Activated T-helper 1 cell treated with anti-CD3 and anti-CD28 coated beads, Interleukin-12 subunit alpha, Interleukin-12 subunit beta, Interleukin-2, Interleukin-4 antibody, amounts not matched to agents 30 ng/mL and 10 ng/mL and 1 ng/mL, durations not matched to agents 14 hours and 24 hours and 36 hours (primary cell): ENCODE measurements at regions of chr7 and their contacts with region 1.

Region 1: GRCh38 chr7:43834463-43835251 is 34.7 kb downstream of the MRPS24 start:
- DNase-seq: peak; percentile 24
- H3K4me3 Mint-ChIP-seq: peak overlapping the region; percentile 73
- H3K27ac Mint-ChIP-seq: peak overlapping the region; percentile 78
- H3K4me1 Mint-ChIP-seq: peaks cover 16% of the 10 kb centered on the region
- H3K27me3 Mint-ChIP-seq: peaks cover 2% of the 10 kb centered on the region

Region 2: DNA sequence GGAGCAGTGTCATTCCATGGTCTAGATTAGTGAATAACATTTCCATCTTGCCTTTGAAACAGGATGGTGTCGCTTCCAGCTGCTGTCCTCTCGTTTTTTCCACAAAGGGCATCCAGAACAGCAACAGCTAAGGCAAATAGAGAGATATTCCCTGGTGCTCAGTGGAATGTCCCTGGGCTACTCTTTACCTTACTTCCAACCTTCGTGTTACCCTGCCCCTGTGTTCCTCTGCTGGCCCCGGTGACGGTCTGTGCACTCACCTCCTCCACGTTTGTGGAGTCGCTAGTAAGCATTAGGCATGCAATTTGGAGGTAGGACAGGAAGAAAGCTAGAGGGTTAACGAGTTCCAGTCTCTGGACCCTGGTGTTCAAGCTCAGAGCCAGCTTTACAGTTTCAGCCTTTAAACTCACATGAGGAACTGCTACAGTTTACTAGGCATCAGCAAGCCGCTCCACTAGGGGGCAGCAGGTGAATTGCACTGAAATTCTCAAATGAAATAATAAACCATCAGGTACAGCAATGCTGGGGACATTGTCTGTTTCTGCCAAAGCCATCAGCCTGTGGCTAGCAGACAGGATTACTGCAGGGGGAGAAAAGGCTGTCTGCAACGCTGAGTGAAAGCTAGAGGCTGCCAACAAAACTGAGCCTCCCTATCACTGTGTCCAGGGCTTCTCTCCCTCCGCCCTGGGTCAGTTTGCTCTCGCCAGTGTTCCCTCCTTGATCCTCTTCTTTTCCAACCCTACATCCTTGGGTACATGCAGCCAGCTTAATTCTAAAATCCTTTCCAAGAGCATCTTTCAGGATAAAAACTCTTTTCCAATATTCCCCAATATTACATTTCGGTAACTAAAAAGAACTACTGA is 893.4 kb before region 1 on chr7:
- intact Hi-C with region 1: loop called (anchors 2 kb)
- DNase-seq: peak; percentile 60
- H3K4me3 Mint-ChIP-seq: no peak overlapping the region
- H3K27ac Mint-ChIP-seq: no peak overlapping the region
- H3K4me1 Mint-ChIP-seq: peaks cover 26% of the 10 kb centered on the region
- H3K27me3 Mint-ChIP-seq: no peaks in the 10 kb centered on the region

Region 3: DNA sequence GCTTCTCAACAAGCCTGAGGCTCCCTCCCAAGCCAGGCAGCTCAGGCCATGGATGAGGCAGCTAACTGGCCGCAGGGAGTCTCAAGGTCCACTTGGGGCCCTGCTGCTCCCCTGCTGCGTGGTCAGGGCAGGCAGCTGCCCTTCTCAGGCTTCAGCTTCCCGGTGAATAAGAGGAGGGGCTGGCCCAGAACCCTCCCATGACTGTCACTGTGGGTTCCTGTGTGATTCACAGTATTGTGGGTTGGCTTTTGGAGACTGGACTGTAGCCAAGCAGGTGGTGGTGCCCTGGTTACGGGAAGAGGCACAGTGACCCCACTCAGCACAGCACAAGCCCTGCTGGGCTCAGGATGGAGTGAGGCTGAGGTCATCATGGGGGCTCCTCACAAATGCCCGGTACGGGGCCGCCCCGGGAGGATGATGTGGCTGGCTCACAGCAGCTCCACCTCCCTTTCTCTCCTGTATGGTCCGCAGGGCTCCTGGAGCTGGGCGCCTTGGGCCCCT is 532.4 kb before region 1 on chr7:
- intact Hi-C with region 1: loop called (anchors 10 kb)
- DNase-seq: no peak
- H3K4me3 Mint-ChIP-seq: no peak overlapping the region
- H3K27ac Mint-ChIP-seq: no peak overlapping the region
- H3K4me1 Mint-ChIP-seq: peaks cover 23% of the 10 kb centered on the region
- H3K27me3 Mint-ChIP-seq: peaks cover 7% of the 10 kb centered on the region

Region 4: GRCh38 chr7:43582503-43583423 is 251.9 kb before region 1 on chr7 and contains the start of gene STK17A:
- intact Hi-C with region 1: loop called (anchors 1 kb)
- DNase-seq: peak; percentile 93
- H3K4me3 Mint-ChIP-seq: peak within 1 kb of the TSS; percentile 96
- H3K27ac Mint-ChIP-seq: peak within 1 kb of the TSS; percentile 96
- H3K4me1 Mint-ChIP-seq: peaks cover 36% of the 10 kb centered on the region
- H3K27me3 Mint-ChIP-seq: peaks cover 21% of the 10 kb centered on the region
- total RNA-seq, gene STK17A: 44.8 and 47.8 TPM in 2 replicates

Region 5: DNA sequence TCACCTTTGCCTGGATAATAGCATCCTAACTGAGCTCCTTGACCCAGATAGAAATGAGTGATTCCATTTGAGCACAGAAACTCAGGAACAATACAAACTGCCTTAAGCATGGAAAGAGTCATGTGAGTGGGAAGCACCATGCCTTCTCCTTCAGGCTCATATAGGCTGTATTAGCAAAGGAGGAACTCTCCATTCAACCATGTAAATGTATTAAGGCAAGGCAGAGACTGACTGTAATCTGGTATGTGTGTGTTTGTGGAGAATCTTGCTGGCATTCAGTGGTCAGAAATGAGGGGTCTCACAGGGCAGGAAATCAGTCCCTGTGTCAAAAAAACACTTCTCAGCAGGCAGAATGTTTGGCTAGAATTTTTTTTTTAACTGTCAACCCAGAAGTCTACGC is 145.5 kb before region 1 on chr7:
- intact Hi-C with region 1: no loop called
- DNase-seq: no peak
- H3K4me3 Mint-ChIP-seq: no peak overlapping the region
- H3K27ac Mint-ChIP-seq: no peak overlapping the region
- H3K4me1 Mint-ChIP-seq: peaks cover 47% of the 10 kb centered on the region
- H3K27me3 Mint-ChIP-seq: no peaks in the 10 kb centered on the region

Region 6: GRCh38 chr7:43721193-43721806 is 113.4 kb before region 1 on chr7:
- intact Hi-C with region 1: loop called (anchors 1 kb)
- DNase-seq: no peak
- H3K4me3 Mint-ChIP-seq: no peak overlapping the region
- H3K27ac Mint-ChIP-seq: no peak overlapping the region
- H3K4me1 Mint-ChIP-seq: peaks cover 27% of the 10 kb centered on the region
- H3K27me3 Mint-ChIP-seq: no peaks in the 10 kb centered on the region

Region 7: GRCh38 chr7:43808135-43808809 is 26.4 kb before region 1 on chr7:
- intact Hi-C with region 1: no loop called
- DNase-seq: no peak
- H3K4me3 Mint-ChIP-seq: no peak overlapping the region
- H3K27ac Mint-ChIP-seq: no peak overlapping the region
- H3K4me1 Mint-ChIP-seq: peaks cover 9% of the 10 kb centered on the region
- H3K27me3 Mint-ChIP-seq: peaks cover 4% of the 10 kb centered on the region

Region 8: DNA sequence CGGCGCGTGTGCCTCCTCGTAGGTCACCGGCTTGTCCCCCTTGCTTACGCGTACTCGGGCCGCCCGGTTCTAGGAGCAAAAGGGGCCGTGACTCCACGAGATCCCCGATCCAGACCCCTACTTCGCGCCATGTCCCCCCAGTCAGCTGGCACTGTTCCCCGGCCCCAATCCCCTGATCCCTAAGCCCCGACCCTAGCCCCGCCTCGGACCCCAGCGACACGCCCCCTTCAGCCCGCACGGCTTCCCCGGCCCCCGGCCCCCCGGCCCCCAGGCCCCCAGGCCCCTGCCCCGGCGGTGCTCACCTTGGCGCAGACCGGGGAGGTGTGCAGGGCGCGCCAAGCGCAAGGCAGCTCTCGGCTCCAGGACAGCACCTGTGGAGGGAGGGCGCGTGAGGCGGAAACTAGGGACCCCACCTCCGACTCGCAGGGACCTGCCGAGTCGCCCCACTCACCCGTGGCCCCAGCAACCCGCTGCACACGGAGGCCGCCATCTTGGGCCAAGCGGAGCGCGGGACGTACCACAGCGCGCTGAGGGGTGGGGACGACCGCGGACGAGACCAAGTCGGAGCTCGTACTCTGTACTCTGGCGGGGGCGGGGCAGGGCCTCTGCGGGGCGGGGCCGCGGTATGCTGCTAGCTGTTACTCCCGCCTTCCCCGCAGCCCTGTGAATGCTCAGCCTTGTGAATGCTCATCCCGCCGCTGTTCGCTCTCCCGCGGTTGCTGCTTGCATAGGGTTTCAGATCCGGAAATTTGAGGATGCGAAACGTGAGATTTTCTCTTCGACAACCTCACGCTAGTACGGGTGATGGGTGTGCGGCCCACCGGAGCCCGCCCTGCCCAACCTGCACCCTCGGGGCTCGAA is 34.6 kb after region 1 on chr7 and contains the start of gene MRPS24:
- intact Hi-C with region 1: loop called (anchors 2 kb)
- DNase-seq: peak; percentile 88
- H3K4me3 Mint-ChIP-seq: peak within 1 kb of the TSS; percentile 85
- H3K27ac Mint-ChIP-seq: peak within 1 kb of the TSS; percentile 85
- H3K4me1 Mint-ChIP-seq: peaks cover 23% of the 10 kb centered on the region
- H3K27me3 Mint-ChIP-seq: no peaks in the 10 kb centered on the region
- total RNA-seq, gene MRPS24: 118 and 125 TPM in 2 replicates